ENCODE measurements at regions of chr2 and their contacts with region 1.

Region 1: DNA sequence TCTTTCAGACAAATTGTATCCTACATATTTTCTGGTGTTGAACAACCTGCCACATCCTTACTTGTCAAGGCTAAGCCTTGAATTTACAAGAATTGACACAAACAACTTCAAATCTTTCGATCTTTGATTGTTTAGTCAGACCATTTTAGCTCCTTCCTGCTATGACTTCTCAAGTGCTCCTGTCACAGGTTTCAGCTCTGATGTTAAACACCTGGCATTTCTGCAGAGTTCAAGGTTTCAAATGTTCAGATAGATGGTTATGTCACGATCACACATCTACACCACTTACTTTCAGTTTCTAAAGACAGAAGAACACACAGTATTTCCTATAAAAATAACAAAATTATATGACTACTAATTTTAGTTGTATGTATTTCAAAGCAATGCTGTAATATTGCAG is 84.0 kb downstream of the RND3 start:
- DNase-seq: no peak
- ATAC-seq: no peak
- H3K4me3 ChIP-seq: peak overlapping the region in 5 of 10 donors; percentile 17 to 28 (median 25)
- H3K27ac ChIP-seq: no peak overlapping the region
- H3K4me1 ChIP-seq: no peaks in the 10 kb centered on the region
- H3K27me3 ChIP-seq: no peaks in the 10 kb centered on the region
- CTCF ChIP-seq: no peak

Region 2: GRCh38 chr2:151051574-151052220 is 648.2 kb after region 1 on chr2:
- intact Hi-C with region 1: loop called in 1 of 10 experiments (anchors 10 kb)
- DNase-seq: peak in 1 of 2 donors; percentile 6
- ATAC-seq: peak in 3 of 8 donors; percentile 51 to 55 (median 53)
- H3K4me3 ChIP-seq: no peak overlapping the region
- H3K27ac ChIP-seq: no peak overlapping the region
- H3K4me1 ChIP-seq: peaks cover 0 to 4% (median 0%) of the 10 kb centered on the region in 9 donors
- H3K27me3 ChIP-seq: no peaks in the 10 kb centered on the region
- CTCF ChIP-seq: peak; percentile 54 to 86 (median 81)

Region 3: GRCh38 chr2:151230627-151231140 is 827.2 kb after region 1 on chr2:
- intact Hi-C with region 1: loop called in 1 of 10 experiments (anchors 5 kb)
- DNase-seq: no peak
- ATAC-seq: no peak
- H3K4me3 ChIP-seq: no peak overlapping the region
- H3K27ac ChIP-seq: no peak overlapping the region
- H3K4me1 ChIP-seq: peaks cover 0 to 3% (median 0%) of the 10 kb centered on the region in 9 donors
- H3K27me3 ChIP-seq: peaks cover 0 to 12% (median 0%) of the 10 kb centered on the region in 7 donors
- CTCF ChIP-seq: no peak

Measured in heart right ventricle (tissue), 16 donors.